Activated naive CD4-positive, alpha-beta T cell treated with anti-CD3 and anti-CD28 coated beads, Interleukin-2, amount 10 ng/mL, durations not matched to agents 7 days and 5 days (primary cell): ENCODE measurements at regions of chr1 and their contacts with region 1.

Region 1: DNA sequence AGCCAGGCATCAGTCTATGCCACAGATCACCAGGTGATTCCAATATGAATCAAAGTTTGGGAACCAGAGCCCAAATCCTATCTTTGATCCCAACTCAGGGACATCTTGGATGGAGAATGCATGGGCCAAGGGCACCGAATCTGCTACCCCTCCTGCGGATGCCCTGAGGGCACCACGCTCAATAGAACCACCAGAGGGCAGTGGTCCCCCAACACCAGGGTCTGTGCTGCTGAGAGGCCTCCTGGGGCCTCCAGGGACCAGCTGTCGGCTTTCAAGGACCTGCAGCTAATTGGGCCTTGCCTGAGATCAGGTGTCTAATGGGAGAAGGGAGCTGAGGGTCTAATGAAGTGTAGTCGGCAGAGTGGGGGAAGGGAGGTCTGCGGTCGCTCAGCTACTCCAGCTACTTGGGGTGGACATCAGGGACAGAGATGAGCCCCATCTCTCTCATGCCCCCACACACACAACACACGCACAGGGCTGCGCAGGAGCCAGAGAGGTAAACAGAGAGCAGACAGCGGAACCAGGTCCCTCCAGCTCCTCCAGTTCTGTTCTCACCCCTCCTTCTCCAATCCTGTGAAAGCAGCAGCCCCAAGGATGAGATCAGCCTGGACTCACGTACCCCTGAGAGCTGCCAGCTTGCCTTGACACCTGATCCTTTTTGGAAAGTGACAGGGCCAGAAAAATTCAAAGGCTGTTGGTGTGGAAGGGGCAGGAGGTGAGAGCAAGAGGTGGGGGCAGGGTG is 34.9 kb upstream of the PPP1R15B start:
- DNase-seq: peak; percentile 85
- H3K4me3 Mint-ChIP-seq: no peak overlapping the region
- H3K27ac Mint-ChIP-seq: peak overlapping the region; percentile 33
- H3K4me1 Mint-ChIP-seq: peaks cover 52% of the 10 kb centered on the region
- H3K27me3 Mint-ChIP-seq: no peaks in the 10 kb centered on the region

Region 2: DNA sequence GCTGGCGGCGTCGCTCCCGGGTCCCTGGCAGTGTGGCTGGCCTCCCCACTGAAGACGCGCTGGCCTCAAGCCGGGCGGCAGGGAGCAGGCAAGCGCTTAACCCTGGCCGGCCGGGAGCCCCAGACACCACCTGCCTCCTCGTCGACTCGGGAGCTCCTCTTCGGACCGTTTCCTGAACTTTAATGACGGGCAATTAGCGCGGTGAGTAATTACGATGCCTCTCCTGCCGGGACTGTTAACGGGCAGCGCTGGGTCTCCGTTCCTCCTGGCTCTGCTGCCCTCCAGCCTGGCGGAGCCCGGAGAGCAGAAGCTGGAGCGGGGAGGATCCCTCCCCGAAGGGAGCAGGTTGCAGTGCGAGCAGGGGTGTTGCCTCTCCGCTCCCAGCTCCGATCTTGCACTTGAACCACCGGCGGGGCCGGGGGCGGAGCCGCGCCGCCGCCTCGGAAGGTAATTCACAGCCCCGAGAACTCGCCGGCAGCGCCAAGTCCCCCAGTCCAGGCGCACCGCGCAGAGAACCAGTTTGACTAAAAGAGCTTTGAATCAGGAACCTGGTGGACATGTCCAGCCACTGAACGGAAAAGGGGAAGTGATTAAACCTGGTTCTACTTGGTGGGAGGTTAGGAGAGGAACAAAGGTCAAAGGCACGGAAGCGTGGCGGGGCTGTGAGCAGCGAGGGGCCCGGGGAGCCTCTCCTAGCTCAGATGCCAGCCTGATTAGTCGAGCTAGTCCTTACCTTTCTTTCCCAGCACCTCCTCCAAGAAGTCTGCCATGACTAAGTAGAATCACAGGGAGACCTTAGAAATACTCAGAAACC is 68.5 kb before region 1 on chr1:
- CTCF ChIA-PET with region 1: no interaction called
- DNase-seq: peak; percentile 57
- H3K4me3 Mint-ChIP-seq: peak overlapping the region; percentile 61
- H3K27ac Mint-ChIP-seq: no peak overlapping the region
- H3K4me1 Mint-ChIP-seq: peaks cover 11% of the 10 kb centered on the region
- H3K27me3 Mint-ChIP-seq: peaks cover 1% of the 10 kb centered on the region

Region 3: DNA sequence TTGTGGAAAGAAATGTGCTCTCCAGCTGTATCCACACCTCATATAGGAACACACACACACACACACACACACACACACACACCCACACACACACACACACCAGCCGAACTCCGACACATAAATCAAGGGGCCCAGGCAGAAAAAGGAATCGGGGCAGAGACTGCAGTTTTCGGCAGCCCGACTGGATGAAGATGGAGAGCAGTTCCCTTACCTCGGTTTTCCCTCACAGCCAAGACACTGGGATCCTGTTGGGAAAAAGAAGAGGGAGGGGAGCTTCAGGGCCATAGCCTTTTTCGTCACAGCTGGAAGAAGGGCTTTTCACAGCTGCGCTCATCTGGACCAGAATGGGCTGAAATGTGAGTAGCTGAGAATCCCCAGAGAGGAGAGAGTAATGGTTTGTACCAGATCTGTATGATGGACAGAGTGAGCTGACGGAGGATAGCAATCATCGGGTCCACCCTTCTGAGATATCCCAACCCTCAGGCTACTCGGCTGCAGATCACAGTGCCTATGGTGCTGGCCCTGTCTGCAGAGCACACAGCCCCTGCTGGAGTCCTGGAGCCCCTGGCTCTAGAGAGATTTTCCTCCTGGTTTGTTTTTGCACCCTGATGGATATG is 10.4 kb after region 1 on chr1:
- CTCF ChIA-PET with region 1: interaction called, 22 read pairs
- DNase-seq: no peak
- H3K4me3 Mint-ChIP-seq: no peak overlapping the region
- H3K27ac Mint-ChIP-seq: no peak overlapping the region
- H3K4me1 Mint-ChIP-seq: peaks cover 44% of the 10 kb centered on the region
- H3K27me3 Mint-ChIP-seq: no peaks in the 10 kb centered on the region

Region 4: DNA sequence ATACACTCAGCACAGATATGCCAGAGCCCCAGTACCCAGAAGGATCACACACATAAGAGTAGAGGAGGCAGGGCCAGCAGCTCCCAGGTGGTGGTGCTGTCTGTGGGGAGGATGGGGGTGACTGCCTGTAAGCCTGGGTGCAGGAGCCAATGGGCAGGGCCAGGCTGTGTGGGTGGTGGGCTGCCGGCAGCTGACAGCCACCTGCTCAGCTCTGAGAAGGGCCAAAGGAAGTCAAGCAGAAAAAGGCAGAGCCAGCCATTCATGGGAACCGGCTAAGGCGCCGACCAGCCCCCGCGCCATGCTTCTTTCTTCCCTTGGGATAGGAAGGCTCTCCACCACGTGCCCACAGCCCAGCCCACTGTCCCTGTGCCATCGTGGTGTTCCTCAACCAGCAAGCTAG is 34.0 kb after region 1 on chr1:
- CTCF ChIA-PET with region 1: interaction called, 17 read pairs
- DNase-seq: no peak
- H3K4me3 Mint-ChIP-seq: no peak overlapping the region
- H3K27ac Mint-ChIP-seq: no peak overlapping the region
- H3K4me1 Mint-ChIP-seq: peaks cover 31% of the 10 kb centered on the region
- H3K27me3 Mint-ChIP-seq: no peaks in the 10 kb centered on the region

Region 5: DNA sequence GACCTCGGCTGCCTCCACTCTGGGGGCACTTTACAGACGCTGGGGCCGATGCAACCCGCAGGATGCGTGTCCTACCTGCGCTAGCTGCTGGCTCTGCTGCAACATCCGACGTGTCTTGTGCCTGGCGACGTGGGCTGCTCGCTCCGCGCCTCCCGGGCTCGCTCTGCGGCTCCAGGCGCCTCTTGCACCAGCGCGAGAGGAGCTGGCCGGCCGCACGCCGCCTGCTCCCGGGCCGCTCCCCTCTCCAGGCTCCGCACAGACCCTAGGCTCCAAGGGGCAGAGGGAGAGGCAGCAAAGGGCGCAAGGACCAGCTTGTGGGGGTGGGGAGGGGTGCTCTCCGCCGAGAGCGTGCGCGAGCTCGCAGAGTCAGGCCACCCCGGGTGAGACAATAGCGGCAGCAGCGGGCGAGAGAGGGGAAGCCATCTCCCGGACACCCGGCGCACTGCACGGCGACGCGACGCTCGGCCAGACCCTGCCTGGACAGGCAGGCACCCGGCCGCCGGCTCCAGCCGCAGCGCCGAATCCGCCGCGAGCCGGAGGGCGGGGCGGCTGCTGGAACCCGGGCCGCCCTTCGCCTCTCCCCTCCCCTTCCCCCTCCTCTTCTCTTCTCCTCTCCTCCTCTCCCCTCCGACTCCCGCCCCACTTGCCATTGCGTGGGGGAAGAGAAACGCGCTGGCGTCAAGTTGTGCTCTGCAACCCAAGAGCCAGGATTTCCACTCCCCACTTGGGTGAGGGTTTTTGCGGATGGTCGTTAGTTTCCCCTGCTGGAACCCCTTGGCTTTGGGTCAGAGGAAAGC is 47.9 kb after region 1 on chr1 and contains the start of gene PIK3C2B:
- CTCF ChIA-PET with region 1: interaction called, 508 read pairs
- DNase-seq: peak; percentile 81
- H3K4me3 Mint-ChIP-seq: peak within 1 kb of the TSS; percentile 93
- H3K27ac Mint-ChIP-seq: peak within 1 kb of the TSS; percentile 95
- H3K4me1 Mint-ChIP-seq: peaks cover 66% of the 10 kb centered on the region
- H3K27me3 Mint-ChIP-seq: peaks cover 13% of the 10 kb centered on the region